ENCODE measurements at regions of chr11 and their contacts with region 1.

Region 1: GRCh38 chr11:94767761-94768601 is at the start of gene AMOTL1:
- DNase-seq: peak; percentile 95 to 96
- H3K4me3 ChIP-seq: peak within 1 kb of the TSS; percentile 75
- H3K4me3 Mint-ChIP-seq: no peak within 1 kb of the TSS
- H3K27ac Mint-ChIP-seq: peak within 1 kb of the TSS; percentile 84
- H3K4me1 ChIP-seq: peaks cover 38% of the 10 kb centered on the region
- H3K4me1 Mint-ChIP-seq: peaks cover 15% of the 10 kb centered on the region
- H3K27me3 ChIP-seq: no peaks in the 10 kb centered on the region
- H3K27me3 Mint-ChIP-seq: no peaks in the 10 kb centered on the region
- CTCF ChIP-seq: no peak
- total RNA-seq, gene AMOTL1: 60.8 and 64.6 TPM in 2 replicates

Region 2: DNA sequence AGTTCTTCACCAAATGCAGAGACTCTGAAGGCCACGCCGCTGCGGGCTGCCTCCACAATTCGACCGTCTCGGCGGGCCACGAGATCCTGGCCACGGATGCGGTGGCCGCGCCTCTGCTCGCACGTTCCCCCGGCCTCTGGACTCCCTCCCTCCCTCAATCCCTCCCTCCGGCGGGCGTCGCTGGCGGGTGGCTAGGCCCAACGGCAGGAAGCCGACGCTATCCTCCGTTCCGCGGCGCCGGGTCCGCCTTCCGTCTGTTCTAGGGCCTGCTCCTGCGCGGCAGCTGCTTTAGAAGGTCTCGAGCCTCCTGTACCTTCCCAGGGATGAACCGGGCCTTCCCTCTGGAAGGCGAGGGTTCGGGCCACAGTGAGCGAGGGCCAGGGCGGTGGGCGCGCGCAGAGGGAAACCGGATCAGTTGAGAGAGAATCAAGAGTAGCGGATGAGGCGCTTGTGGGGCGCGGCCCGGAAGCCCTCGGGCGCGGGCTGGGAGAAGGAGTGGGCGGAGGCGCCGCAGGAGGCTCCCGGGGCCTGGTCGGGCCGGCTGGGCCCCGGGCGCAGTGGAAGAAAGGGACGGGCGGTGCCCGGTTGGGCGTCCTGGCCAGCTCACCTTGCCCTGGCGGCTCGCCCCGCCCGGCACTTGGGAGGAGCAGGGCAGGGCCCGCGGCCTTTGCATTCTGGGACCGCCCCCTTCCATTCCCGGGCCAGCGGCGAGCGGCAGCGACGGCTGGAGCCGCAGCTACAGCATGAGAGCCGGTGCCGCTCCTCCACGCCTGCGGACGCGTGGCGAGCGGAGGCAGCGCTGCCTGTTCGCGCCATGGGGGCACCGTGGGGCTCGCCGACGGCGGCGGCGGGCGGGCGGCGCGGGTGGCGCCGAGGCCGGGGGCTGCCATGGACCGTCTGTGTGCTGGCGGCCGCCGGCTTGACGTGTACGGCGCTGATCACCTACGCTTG is 224.0 kb before region 1 on chr11 and contains the start of gene FUT4:
- CTCF ChIA-PET with region 1: no interaction called
- POLR2A ChIA-PET with region 1: no interaction called
- intact Hi-C with region 1: loop called (anchors 5 kb)
- DNase-seq: peak; percentile 96 to 98
- H3K4me3 ChIP-seq: peak within 1 kb of the TSS; percentile 71
- H3K4me3 Mint-ChIP-seq: peak within 1 kb of the TSS; percentile 86
- H3K27ac Mint-ChIP-seq: peak within 1 kb of the TSS; percentile 90
- H3K4me1 ChIP-seq: peaks cover 29% of the 10 kb centered on the region
- H3K4me1 Mint-ChIP-seq: peaks cover 34% of the 10 kb centered on the region
- H3K27me3 ChIP-seq: no peaks in the 10 kb centered on the region
- H3K27me3 Mint-ChIP-seq: no peaks in the 10 kb centered on the region
- CTCF ChIP-seq: no peak
- total RNA-seq, gene FUT4: 24.5 and 25.0 TPM in 2 replicates

Region 3: DNA sequence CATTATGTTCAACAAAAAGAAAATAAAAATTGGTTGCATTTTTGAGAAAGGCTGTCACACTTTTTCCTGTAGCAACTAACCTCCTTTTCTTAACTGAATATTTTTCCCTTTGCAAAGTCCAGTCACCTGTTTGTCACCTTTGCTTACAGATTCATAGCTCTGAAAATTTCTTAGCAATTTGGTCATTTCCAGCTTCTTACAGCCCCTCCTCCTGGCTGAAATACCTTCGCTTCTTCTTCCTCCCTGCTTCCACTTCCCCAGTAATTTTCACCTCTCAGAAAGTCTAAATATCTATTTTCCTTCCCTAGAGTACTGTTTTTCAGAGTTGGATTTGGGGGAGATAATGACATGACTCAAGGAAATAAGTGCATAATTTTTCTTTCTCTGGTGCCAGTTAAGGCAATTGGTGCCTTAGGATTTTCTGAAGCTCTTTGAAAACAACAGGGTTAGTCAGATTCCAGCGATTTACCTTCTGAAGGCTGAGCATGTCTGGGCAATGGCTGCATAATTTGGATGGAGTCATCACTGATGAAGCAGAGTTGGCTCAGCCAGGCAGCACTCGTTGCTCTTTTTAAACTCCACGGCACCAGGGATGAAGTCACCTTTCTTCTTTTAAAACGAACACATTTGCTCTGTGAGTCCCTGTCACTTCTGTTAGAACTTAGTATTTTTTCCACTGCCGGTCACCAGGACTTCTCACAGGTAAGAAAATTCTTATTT is 61.9 kb before region 1 on chr11:
- CTCF ChIA-PET with region 1: no interaction called
- POLR2A ChIA-PET with region 1: no interaction called
- intact Hi-C with region 1: loop called (anchors 2 kb)
- DNase-seq: no peak
- H3K4me3 ChIP-seq: no peak overlapping the region
- H3K4me3 Mint-ChIP-seq: peak overlapping the region; percentile 34
- H3K27ac Mint-ChIP-seq: peak overlapping the region; percentile 63
- H3K4me1 ChIP-seq: peaks cover 36% of the 10 kb centered on the region
- H3K4me1 Mint-ChIP-seq: peaks cover 26% of the 10 kb centered on the region
- H3K27me3 ChIP-seq: no peaks in the 10 kb centered on the region
- H3K27me3 Mint-ChIP-seq: no peaks in the 10 kb centered on the region
- CTCF ChIP-seq: no peak

Region 4: DNA sequence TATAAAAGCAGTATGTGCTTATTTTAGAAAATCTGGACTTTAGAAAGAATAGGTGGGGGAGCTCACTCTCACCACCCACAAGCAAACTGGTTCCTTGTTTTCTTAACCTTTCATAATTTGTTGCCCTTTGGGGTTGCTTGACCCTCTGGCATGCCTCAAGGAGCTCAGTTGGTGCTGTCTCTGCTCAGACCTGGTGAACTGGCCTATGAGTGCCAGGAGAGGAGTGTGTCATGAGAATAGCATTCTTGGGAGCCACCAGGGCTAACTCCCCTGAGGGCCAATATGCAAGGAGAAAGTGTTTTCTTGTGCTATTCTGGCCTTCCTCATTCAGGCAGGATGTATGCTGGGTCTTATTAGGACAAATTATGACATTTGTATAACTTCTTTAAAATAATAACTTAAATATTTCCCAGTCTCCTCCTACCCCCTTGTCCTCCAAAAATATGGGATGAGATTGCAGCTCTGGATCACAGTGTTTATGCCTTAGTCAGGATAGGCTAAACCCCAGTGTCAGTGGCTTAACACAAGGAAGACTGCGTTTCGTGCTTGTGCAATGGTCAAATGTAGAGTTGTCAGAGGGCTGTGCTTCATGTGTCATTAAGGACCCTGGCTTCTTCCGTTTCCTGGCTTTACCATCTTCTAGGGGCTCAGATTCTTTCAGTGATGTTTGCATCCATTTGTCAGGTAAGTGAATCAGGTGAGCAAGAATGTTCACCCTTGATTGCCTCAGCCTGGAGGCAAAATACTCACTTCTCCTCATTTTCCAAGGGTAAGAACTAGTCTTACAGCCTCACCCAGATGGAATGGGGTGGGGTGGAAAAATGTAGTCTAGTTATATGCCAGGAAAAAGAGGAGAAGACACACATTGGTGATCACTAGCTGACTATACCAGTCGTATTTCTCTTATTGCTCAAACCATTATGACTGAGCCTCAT is 20.6 kb before region 1 on chr11:
- CTCF ChIA-PET with region 1: interaction called, 3 read pairs
- POLR2A ChIA-PET with region 1: interaction called, 9 read pairs
- intact Hi-C with region 1: loop called (anchors 1 kb)
- DNase-seq: peak; percentile 61 to 83
- H3K4me3 ChIP-seq: no peak overlapping the region
- H3K4me3 Mint-ChIP-seq: peak overlapping the region; percentile 30
- H3K27ac Mint-ChIP-seq: peak overlapping the region; percentile 45
- H3K4me1 ChIP-seq: peaks cover 51% of the 10 kb centered on the region
- H3K4me1 Mint-ChIP-seq: peaks cover 47% of the 10 kb centered on the region
- H3K27me3 ChIP-seq: no peaks in the 10 kb centered on the region
- H3K27me3 Mint-ChIP-seq: no peaks in the 10 kb centered on the region
- CTCF ChIP-seq: no peak

Region 5: GRCh38 chr11:94794287-94795168 is 26.5 kb after region 1 on chr11:
- CTCF ChIA-PET with region 1: no interaction called
- POLR2A ChIA-PET with region 1: no interaction called
- intact Hi-C with region 1: no loop called
- DNase-seq: no peak
- H3K4me3 ChIP-seq: no peak overlapping the region
- H3K4me3 Mint-ChIP-seq: no peak overlapping the region
- H3K27ac Mint-ChIP-seq: no peak overlapping the region
- H3K4me1 ChIP-seq: peaks cover 35% of the 10 kb centered on the region
- H3K4me1 Mint-ChIP-seq: peaks cover 7% of the 10 kb centered on the region
- H3K27me3 ChIP-seq: no peaks in the 10 kb centered on the region
- H3K27me3 Mint-ChIP-seq: no peaks in the 10 kb centered on the region
- CTCF ChIP-seq: no peak

Region 6: DNA sequence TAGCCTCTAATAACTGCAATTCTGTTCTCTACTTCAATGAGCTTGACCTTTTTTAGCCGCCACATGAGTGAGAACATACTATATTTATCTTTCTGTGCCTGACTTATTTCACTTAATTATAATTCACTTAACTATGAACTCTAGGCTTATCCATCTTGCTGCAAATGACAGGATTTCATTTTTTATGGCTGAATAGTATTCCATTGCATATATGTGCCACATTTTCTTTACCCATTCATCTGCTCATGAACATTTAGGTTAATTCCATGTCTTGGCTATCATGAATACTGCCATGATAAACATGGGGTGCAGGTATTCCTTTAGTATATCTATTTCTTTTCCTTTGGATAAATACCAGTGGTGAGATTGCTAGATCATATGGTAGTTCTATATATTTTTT is 120.2 kb after region 1 on chr11:
- CTCF ChIA-PET with region 1: no interaction called
- POLR2A ChIA-PET with region 1: no interaction called
- intact Hi-C with region 1: no loop called
- DNase-seq: no peak
- H3K4me3 ChIP-seq: no peak overlapping the region
- H3K4me3 Mint-ChIP-seq: no peak overlapping the region
- H3K27ac Mint-ChIP-seq: no peak overlapping the region
- H3K4me1 ChIP-seq: no peaks in the 10 kb centered on the region
- H3K4me1 Mint-ChIP-seq: no peaks in the 10 kb centered on the region
- H3K27me3 ChIP-seq: no peaks in the 10 kb centered on the region
- H3K27me3 Mint-ChIP-seq: no peaks in the 10 kb centered on the region
- CTCF ChIP-seq: no peak

Region 7: GRCh38 chr11:94973099-94973968 is 205.4 kb after region 1 on chr11 and contains the starts of genes CWC15 and KDM4D:
- CTCF ChIA-PET with region 1: interaction called, 3 read pairs
- POLR2A ChIA-PET with region 1: interaction called, 4 read pairs
- intact Hi-C with region 1: loop called (anchors 5 kb)
- DNase-seq: peak; percentile 97
- H3K4me3 ChIP-seq: peak within 1 kb of the TSS; percentile 56
- H3K4me3 Mint-ChIP-seq: peak within 1 kb of the TSS; percentile 89
- H3K27ac Mint-ChIP-seq: peak within 1 kb of the TSS; percentile 94
- H3K4me1 ChIP-seq: peaks cover 9% of the 10 kb centered on the region; the same call in 1 of the 2 replicates
- H3K4me1 Mint-ChIP-seq: peaks cover 25% of the 10 kb centered on the region
- H3K27me3 ChIP-seq: no peaks in the 10 kb centered on the region
- H3K27me3 Mint-ChIP-seq: no peaks in the 10 kb centered on the region
- CTCF ChIP-seq: no peak
- total RNA-seq, gene CWC15: 137 and 144 TPM in 2 replicates
- total RNA-seq, gene KDM4D: 0.95 and 1.2 TPM in 2 replicates

Measured in Caco-2 (cell line).